Esophagus muscularis mucosa (tissue), 4 donors: ENCODE measurements at regions of chr14 and their contacts with region 1.

Region 1: GRCh38 chr14:69107407-69108003 is 45.4 kb downstream of the DCAF5 start:
- DNase-seq: no peak
- H3K4me3 ChIP-seq: no peak overlapping the region
- H3K27ac ChIP-seq: peak overlapping the region in 3 of 4 donors; percentile 48 to 52 (median 51)
- H3K4me1 ChIP-seq: peaks cover 0 to 19% (median 16%) of the 10 kb centered on the region in 4 donors
- H3K27me3 ChIP-seq: no peaks in the 10 kb centered on the region
- CTCF ChIP-seq: peak; percentile 73 to 89 (median 80)
- EP300 ChIP-seq: no peak
- POLR2A ChIP-seq: no peak

Region 2: GRCh38 chr14:68864306-68864741 is 243.2 kb before region 1 on chr14:
- intact Hi-C with region 1: loop called (anchors 2 kb)
- DNase-seq: no peak
- H3K4me3 ChIP-seq: no peak overlapping the region
- H3K27ac ChIP-seq: no peak overlapping the region
- H3K4me1 ChIP-seq: no peaks in the 10 kb centered on the region
- H3K27me3 ChIP-seq: no peaks in the 10 kb centered on the region
- CTCF ChIP-seq: no peak
- EP300 ChIP-seq: no peak
- POLR2A ChIP-seq: no peak

Region 3: DNA sequence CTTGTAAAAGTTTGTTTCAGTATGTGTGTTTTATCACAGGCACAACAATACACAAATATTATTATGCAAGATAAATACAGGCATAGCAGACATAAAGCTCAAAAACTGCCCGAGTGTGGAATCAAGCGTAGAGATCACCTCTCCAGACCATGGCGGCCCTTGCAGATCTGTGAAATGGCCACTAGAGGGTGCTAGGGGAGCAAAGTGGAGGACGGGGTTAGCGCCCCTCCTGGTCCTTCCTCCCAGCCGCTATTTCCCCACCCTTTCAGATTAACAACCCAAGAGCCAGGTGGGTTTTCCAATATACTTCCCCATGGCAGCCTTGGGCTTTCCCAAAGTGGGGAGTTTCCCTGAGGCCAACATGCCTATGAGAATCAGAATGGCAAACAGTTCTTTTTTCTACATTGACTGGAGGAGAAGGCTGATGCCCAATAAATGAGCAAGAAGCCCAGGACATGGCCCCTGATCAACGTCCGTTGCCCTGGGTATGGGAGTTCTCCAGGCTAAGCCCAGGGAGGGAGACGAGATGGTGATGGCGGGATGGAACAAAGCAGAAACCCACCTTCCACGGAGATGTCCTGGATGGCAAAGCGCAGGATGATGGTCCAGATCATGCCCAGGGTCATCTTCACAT is 195.8 kb before region 1 on chr14:
- intact Hi-C with region 1: loop called (anchors 5 kb)
- DNase-seq: no peak
- H3K4me3 ChIP-seq: no peak overlapping the region
- H3K27ac ChIP-seq: peak overlapping the region; percentile 90 to 98 (median 97)
- H3K4me1 ChIP-seq: peaks cover 10 to 96% (median 92%) of the 10 kb centered on the region in 4 donors
- H3K27me3 ChIP-seq: no peaks in the 10 kb centered on the region
- CTCF ChIP-seq: peak in 2 of 3 experiments; percentile 98 to 99
- EP300 ChIP-seq: no peak
- POLR2A ChIP-seq: no peak